ENCODE measurements at regions of chr6 and their contacts with region 1.

Region 1: GRCh38 chr6:136792410-136793262 is at the start of gene MAP3K5:
- DNase-seq: peak; percentile 96
- ATAC-seq: peak; percentile 68
- H3K4me3 ChIP-seq: peak within 1 kb of the TSS; percentile 81 to 99 (median 96)
- H3K4me3 Mint-ChIP-seq: peak within 1 kb of the TSS; percentile 95
- H3K27ac ChIP-seq: peak within 1 kb of the TSS; percentile 95 to 98
- H3K27ac Mint-ChIP-seq: peak within 1 kb of the TSS; percentile 95
- H3K4me1 ChIP-seq: peaks cover 35 to 36% of the 10 kb centered on the region in 2 donors
- H3K4me1 Mint-ChIP-seq: peaks cover 39% of the 10 kb centered on the region
- H3K27me3 ChIP-seq: no peaks in the 10 kb centered on the region
- H3K27me3 Mint-ChIP-seq: no peaks in the 10 kb centered on the region
- CTCF ChIP-seq: peak; percentile 76
- total RNA-seq, gene MAP3K5: 34.1 and 35.1 TPM in 2 replicates

Region 2: GRCh38 chr6:136344420-136344819 is 448.2 kb before region 1 on chr6:
- CTCF ChIA-PET with region 1: no interaction called
- POLR2A ChIA-PET with region 1: no interaction called
- intact Hi-C with region 1: no loop called
- DNase-seq: no peak
- ATAC-seq: no peak
- H3K4me3 ChIP-seq: no peak overlapping the region
- H3K4me3 Mint-ChIP-seq: no peak overlapping the region
- H3K27ac ChIP-seq: no peak overlapping the region
- H3K27ac Mint-ChIP-seq: no peak overlapping the region
- H3K4me1 ChIP-seq: no peaks in the 10 kb centered on the region
- H3K4me1 Mint-ChIP-seq: no peaks in the 10 kb centered on the region
- H3K27me3 ChIP-seq: no peaks in the 10 kb centered on the region
- H3K27me3 Mint-ChIP-seq: no peaks in the 10 kb centered on the region
- CTCF ChIP-seq: no peak

Region 3: DNA sequence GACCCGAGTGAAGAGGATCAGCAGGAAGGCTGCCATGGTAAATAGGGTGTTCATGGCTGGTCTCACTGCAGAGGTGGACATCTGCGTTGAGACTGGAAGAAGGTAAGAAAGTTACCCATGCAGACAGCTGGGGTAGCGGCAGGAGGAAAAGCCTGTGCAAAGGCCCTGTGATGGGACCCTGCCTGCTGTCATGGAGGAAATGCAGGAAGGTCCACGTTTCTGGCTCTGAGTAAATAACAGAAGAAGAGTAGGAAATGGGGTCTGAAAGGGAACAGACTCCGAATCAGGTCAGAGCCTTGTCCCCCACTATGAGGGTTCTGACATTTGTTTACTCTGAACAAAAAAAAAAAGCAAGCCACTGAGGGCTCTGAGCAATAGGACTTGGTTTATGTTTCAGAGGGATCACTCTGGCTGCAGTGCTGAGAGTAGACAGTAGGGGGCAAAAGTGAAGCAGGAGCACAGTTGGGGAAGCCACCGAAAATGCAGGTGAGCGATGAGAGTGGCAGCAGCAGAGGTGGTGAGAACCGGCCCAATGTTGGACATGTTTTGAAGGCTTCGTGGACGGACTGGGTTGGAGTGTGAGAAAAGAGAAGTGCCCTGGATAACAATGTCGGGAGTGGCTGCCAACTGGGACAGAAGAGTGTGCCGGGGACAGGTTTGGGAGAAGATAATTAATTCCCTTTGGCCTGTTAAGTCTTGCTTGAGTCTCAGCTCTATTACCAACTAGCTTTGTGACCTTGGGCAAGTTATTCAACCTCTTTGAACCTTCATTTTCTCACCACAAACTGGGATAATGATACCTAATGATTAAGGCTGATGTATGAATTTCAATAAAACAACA is 184.5 kb before region 1 on chr6:
- CTCF ChIA-PET with region 1: interaction called, 11 read pairs
- POLR2A ChIA-PET with region 1: no interaction called
- intact Hi-C with region 1: loop called (anchors 1 kb)
- DNase-seq: peak; percentile 77
- ATAC-seq: peak; percentile 97
- H3K4me3 ChIP-seq: no peak overlapping the region
- H3K4me3 Mint-ChIP-seq: no peak overlapping the region
- H3K27ac ChIP-seq: no peak overlapping the region
- H3K27ac Mint-ChIP-seq: no peak overlapping the region
- H3K4me1 ChIP-seq: no peaks in the 10 kb centered on the region
- H3K4me1 Mint-ChIP-seq: peaks cover 3% of the 10 kb centered on the region
- H3K27me3 ChIP-seq: no peaks in the 10 kb centered on the region
- H3K27me3 Mint-ChIP-seq: no peaks in the 10 kb centered on the region
- CTCF ChIP-seq: peak; percentile 90

Region 4: GRCh38 chr6:136669299-136669699 is 123.3 kb before region 1 on chr6:
- CTCF ChIA-PET with region 1: interaction called, 17 read pairs
- POLR2A ChIA-PET with region 1: interaction called, 3 read pairs
- intact Hi-C with region 1: no loop called
- DNase-seq: no peak
- ATAC-seq: no peak
- H3K4me3 ChIP-seq: no peak overlapping the region
- H3K4me3 Mint-ChIP-seq: no peak overlapping the region
- H3K27ac ChIP-seq: no peak overlapping the region
- H3K27ac Mint-ChIP-seq: no peak overlapping the region
- H3K4me1 ChIP-seq: no peaks in the 10 kb centered on the region
- H3K4me1 Mint-ChIP-seq: no peaks in the 10 kb centered on the region
- H3K27me3 ChIP-seq: no peaks in the 10 kb centered on the region
- H3K27me3 Mint-ChIP-seq: no peaks in the 10 kb centered on the region
- CTCF ChIP-seq: no peak

Region 5: GRCh38 chr6:136723780-136724179 is 68.9 kb before region 1 on chr6:
- CTCF ChIA-PET with region 1: interaction called, 58 read pairs
- POLR2A ChIA-PET with region 1: interaction called, 8 read pairs
- intact Hi-C with region 1: loop called (anchors 2 kb)
- DNase-seq: peak; percentile 57
- ATAC-seq: peak; percentile 94
- H3K4me3 ChIP-seq: no peak overlapping the region
- H3K4me3 Mint-ChIP-seq: peak overlapping the region; percentile 50
- H3K27ac ChIP-seq: peak overlapping the region in 1 of 2 donors; percentile 20
- H3K27ac Mint-ChIP-seq: peak overlapping the region; percentile 47
- H3K4me1 ChIP-seq: peaks cover 29 to 31% of the 10 kb centered on the region in 2 donors
- H3K4me1 Mint-ChIP-seq: peaks cover 48% of the 10 kb centered on the region
- H3K27me3 ChIP-seq: no peaks in the 10 kb centered on the region
- H3K27me3 Mint-ChIP-seq: no peaks in the 10 kb centered on the region
- CTCF ChIP-seq: no peak

Region 6: GRCh38 chr6:136751522-136751956 is 41.1 kb before region 1 on chr6:
- CTCF ChIA-PET with region 1: interaction called, 17 read pairs
- POLR2A ChIA-PET with region 1: no interaction called
- intact Hi-C with region 1: loop called (anchors 1 kb)
- DNase-seq: peak; percentile 75
- ATAC-seq: peak; percentile 90
- H3K4me3 ChIP-seq: peak overlapping the region in 4 of 5 experiments; percentile 25 to 46 (median 36)
- H3K4me3 Mint-ChIP-seq: peak overlapping the region; percentile 69
- H3K27ac ChIP-seq: peak overlapping the region; percentile 79 to 89
- H3K27ac Mint-ChIP-seq: peak overlapping the region; percentile 85
- H3K4me1 ChIP-seq: peaks cover 42 to 44% of the 10 kb centered on the region in 2 donors
- H3K4me1 Mint-ChIP-seq: peaks cover 65% of the 10 kb centered on the region
- H3K27me3 ChIP-seq: no peaks in the 10 kb centered on the region
- H3K27me3 Mint-ChIP-seq: no peaks in the 10 kb centered on the region
- CTCF ChIP-seq: no peak

Region 7: DNA sequence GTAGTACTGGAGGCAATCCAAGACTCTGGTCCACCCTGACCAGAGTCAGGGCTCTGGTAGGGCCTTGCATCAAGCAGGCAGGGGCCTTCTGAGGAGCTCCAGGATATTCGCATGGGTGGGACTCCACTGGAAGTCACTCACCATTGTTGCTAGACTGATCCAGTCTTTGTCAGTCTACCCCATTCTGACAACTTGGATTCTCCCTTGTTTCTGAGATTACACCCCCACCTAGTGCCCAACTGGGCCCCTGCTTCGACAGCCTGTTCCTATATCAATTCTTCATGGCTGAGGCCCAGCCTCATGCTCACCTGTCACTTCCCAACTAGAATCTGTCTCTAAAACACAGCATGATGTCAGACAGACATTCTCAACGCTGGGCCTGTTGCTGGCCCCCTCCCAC is 134.7 kb after region 1 on chr6:
- CTCF ChIA-PET with region 1: interaction called, 6 read pairs
- POLR2A ChIA-PET with region 1: no interaction called
- intact Hi-C with region 1: loop called (anchors 10 kb)
- DNase-seq: peak; percentile 22
- ATAC-seq: peak; percentile 33
- H3K4me3 ChIP-seq: no peak overlapping the region
- H3K4me3 Mint-ChIP-seq: no peak overlapping the region
- H3K27ac ChIP-seq: no peak overlapping the region
- H3K27ac Mint-ChIP-seq: no peak overlapping the region
- H3K4me1 ChIP-seq: peaks cover 17 to 18% of the 10 kb centered on the region in 2 donors
- H3K4me1 Mint-ChIP-seq: peaks cover 15% of the 10 kb centered on the region
- H3K27me3 ChIP-seq: peaks cover 0 to 36% (median 20%) of the 10 kb centered on the region in 4 experiments
- H3K27me3 Mint-ChIP-seq: peaks cover 33% of the 10 kb centered on the region
- CTCF ChIP-seq: peak; percentile 11